ENCODE measurements at regions of chr11 and their contacts with region 1.

Region 1: GRCh38 chr11:63838678-63839507 is at the start of gene MARK2:
- DNase-seq: peak; percentile 97 to 100
- H3K4me3 ChIP-seq: peak within 1 kb of the TSS; percentile 83 to 97 (median 90)
- H3K27ac ChIP-seq: peak within 1 kb of the TSS; percentile 43
- H3K4me1 ChIP-seq: peaks cover 15 to 38% (median 25%) of the 10 kb centered on the region in 4 experiments
- H3K27me3 ChIP-seq: no peaks in the 10 kb centered on the region
- CTCF ChIP-seq: no peak
- EP300 ChIP-seq: no peak
- POLR2A ChIP-seq: peak in 1 of 2 experiments; percentile 48; a peak in 1 of 3 replicates
- RAD21 ChIP-seq: 0 out of 4 replicates have a peak, but pooled peaks of 1 of the 2 experiments have one; percentile 3
- total RNA-seq, gene MARK2: 56.5 and 58.5 TPM in 2 replicates

Region 2: DNA sequence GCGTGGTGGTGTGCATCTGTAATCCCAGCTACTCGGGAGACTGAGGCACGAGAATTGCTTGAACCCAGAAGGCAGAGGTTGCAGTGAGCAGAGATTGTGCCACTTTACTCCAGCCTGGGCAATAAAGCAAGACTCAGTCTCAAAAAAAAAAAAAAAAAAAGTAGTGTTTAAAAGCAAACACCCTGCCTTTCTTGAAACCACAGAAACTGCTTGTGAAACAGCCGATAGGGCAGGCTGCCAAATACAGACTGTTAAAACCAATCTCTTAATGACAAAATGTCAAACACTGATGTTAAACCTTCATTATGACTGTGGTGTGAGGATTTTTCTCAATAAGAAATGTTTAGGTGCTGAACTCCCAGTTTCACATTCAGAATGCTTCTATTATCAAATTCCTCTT is 27.3 kb after region 1 on chr11:
- CTCF ChIA-PET with region 1: interaction called, 33 read pairs
- POLR2A ChIA-PET with region 1: interaction called, 4 read pairs
- DNase-seq: no peak
- H3K4me3 ChIP-seq: no peak overlapping the region
- H3K27ac ChIP-seq: no peak overlapping the region
- H3K4me1 ChIP-seq: peaks cover 0 to 16% (median 4%) of the 10 kb centered on the region in 4 experiments; a peak in 6 of 7 replicates
- H3K27me3 ChIP-seq: no peaks in the 10 kb centered on the region
- CTCF ChIP-seq: no peak
- EP300 ChIP-seq: no peak
- POLR2A ChIP-seq: no peak
- RAD21 ChIP-seq: no peak

Region 3: GRCh38 chr11:63882555-63883242 is 43.8 kb after region 1 on chr11:
- CTCF ChIA-PET with region 1: interaction called, 76 read pairs
- POLR2A ChIA-PET with region 1: interaction called, 6 read pairs
- DNase-seq: peak in 1 of 2 experiments; percentile 69
- H3K4me3 ChIP-seq: peak overlapping the region in 2 of 4 experiments; percentile 10 to 13; a peak in 1 of 8 replicates
- H3K27ac ChIP-seq: no peak overlapping the region
- H3K4me1 ChIP-seq: peaks cover 13 to 30% (median 20%) of the 10 kb centered on the region in 4 experiments
- H3K27me3 ChIP-seq: no peaks in the 10 kb centered on the region
- CTCF ChIP-seq: no peak
- EP300 ChIP-seq: 0 out of 3 replicates have a peak, but pooled peaks of 1 of the 2 experiments have one; percentile 38
- POLR2A ChIP-seq: no peak; a peak in 1 of 3 replicates
- RAD21 ChIP-seq: 0 out of 4 replicates have a peak, but pooled peaks of 1 of the 2 experiments have one; percentile 3

Region 4: GRCh38 chr11:63906585-63906984 is 67.7 kb after region 1 on chr11:
- CTCF ChIA-PET with region 1: interaction called, 163 read pairs
- POLR2A ChIA-PET with region 1: interaction called, 45 read pairs
- DNase-seq: peak in 1 of 2 experiments; percentile 69
- H3K4me3 ChIP-seq: no peak overlapping the region
- H3K27ac ChIP-seq: no peak overlapping the region
- H3K4me1 ChIP-seq: peaks cover 6 to 51% (median 41%) of the 10 kb centered on the region in 4 experiments
- H3K27me3 ChIP-seq: no peaks in the 10 kb centered on the region
- CTCF ChIP-seq: peak in 2 of 3 experiments; percentile 18 to 22; a peak in 2 of 4 replicates
- EP300 ChIP-seq: no peak
- POLR2A ChIP-seq: no peak
- RAD21 ChIP-seq: peak; percentile 28 to 39; a peak in 3 of 4 replicates

Region 5: DNA sequence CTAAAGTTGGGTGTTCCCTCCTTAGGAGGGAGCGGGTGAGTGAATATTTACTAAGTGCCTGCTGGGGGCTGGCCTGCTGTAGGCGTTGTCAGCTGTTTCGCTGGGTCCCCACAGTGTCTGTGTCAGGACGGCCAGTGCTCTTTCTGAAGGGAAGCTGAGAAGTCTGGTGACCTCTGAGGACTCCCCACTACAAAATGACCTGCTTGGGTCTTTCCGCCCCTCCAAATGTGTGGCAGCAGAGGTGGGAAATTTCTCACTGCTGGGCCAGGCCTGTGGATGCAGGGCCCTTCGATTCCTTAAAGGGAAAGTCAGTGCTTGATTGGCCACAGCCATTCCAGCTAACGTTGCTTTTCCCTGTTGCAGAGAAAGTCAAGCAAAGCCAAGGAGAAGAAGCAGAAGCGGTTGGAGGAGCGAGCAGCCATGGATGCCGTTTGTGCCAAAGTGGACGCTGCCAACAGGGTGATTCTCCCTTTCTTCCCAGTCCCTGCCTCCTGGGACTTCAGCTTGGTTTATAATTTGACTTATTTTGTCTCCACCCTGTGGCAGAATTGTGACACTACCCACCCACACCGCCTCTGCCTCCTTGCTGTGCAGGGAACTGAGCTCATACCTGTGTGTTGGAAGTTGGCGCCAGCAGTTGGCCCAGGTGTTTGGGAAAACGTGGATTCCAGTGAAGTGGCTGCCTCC is 106.7 kb after region 1 on chr11:
- CTCF ChIA-PET with region 1: interaction called, 51 read pairs
- POLR2A ChIA-PET with region 1: interaction called, 6 read pairs
- DNase-seq: peak; percentile 27 to 72
- H3K4me3 ChIP-seq: no peak overlapping the region
- H3K27ac ChIP-seq: no peak overlapping the region
- H3K4me1 ChIP-seq: no peaks in the 10 kb centered on the region; a peak in 1 of 7 replicates
- H3K27me3 ChIP-seq: no peaks in the 10 kb centered on the region
- CTCF ChIP-seq: peak; percentile 55 to 72 (median 72)
- EP300 ChIP-seq: no peak
- POLR2A ChIP-seq: no peak
- RAD21 ChIP-seq: peak; percentile 73 to 77